GM10248 (cell line): ENCODE measurements at regions of chr4 and their contacts with region 1.

Region 1: GRCh38 chr4:138680989-138681604 is 334.5 kb upstream of the NOCT start:
- DNase-seq: peak; percentile 58
- CTCF ChIP-seq: peak; percentile 85

Region 2: GRCh38 chr4:137819964-137820383 is 861.1 kb before region 1 on chr4:
- CTCF ChIA-PET with region 1: interaction called, 32 read pairs
- POLR2A ChIA-PET with region 1: no interaction called
- DNase-seq: peak; percentile 7
- CTCF ChIP-seq: peak; percentile 69

Region 3: GRCh38 chr4:138035781-138036258 is 645.3 kb before region 1 on chr4:
- CTCF ChIA-PET with region 1: interaction called, 26 read pairs
- POLR2A ChIA-PET with region 1: no interaction called
- DNase-seq: peak; percentile 56
- CTCF ChIP-seq: peak; percentile 50

Region 4: GRCh38 chr4:138669479-138670315 is 11.4 kb before region 1 on chr4:
- CTCF ChIA-PET with region 1: interaction called, 37 read pairs
- POLR2A ChIA-PET with region 1: no interaction called
- DNase-seq: peak; percentile 32
- CTCF ChIP-seq: no peak

Region 5: DNA sequence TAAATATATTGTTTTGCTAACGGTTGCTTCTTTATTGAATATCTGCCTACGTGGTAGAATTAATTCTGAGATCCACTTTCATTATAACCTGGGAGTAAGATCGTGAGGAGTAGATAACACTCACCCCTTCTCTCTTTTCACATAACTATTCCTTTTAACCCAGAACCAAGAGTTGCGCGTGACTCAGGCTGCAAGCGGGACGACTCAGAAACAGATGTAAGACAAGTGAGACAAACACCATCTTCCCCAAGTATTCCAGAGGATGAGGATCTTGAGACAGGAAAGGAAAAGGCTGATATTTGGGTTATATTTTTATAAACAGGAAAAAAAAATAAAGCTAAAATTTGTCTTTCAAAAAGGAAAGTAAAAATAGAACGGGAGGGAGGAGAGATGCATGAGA is 15.7 kb after region 1 on chr4:
- CTCF ChIA-PET with region 1: interaction called, 50 read pairs
- POLR2A ChIA-PET with region 1: no interaction called
- DNase-seq: no peak
- CTCF ChIP-seq: no peak

Region 6: GRCh38 chr4:138727731-138728130 is 46.6 kb after region 1 on chr4:
- CTCF ChIA-PET with region 1: no interaction called
- POLR2A ChIA-PET with region 1: no interaction called
- DNase-seq: no peak
- CTCF ChIP-seq: no peak

Region 7: GRCh38 chr4:138775890-138776289 is 94.8 kb after region 1 on chr4:
- CTCF ChIA-PET with region 1: no interaction called
- POLR2A ChIA-PET with region 1: no interaction called
- DNase-seq: peak; percentile 18
- CTCF ChIP-seq: no peak

Region 8: GRCh38 chr4:138804711-138805110 is 123.6 kb after region 1 on chr4:
- CTCF ChIA-PET with region 1: no interaction called
- POLR2A ChIA-PET with region 1: no interaction called
- DNase-seq: no peak
- CTCF ChIP-seq: no peak

Region 9: DNA sequence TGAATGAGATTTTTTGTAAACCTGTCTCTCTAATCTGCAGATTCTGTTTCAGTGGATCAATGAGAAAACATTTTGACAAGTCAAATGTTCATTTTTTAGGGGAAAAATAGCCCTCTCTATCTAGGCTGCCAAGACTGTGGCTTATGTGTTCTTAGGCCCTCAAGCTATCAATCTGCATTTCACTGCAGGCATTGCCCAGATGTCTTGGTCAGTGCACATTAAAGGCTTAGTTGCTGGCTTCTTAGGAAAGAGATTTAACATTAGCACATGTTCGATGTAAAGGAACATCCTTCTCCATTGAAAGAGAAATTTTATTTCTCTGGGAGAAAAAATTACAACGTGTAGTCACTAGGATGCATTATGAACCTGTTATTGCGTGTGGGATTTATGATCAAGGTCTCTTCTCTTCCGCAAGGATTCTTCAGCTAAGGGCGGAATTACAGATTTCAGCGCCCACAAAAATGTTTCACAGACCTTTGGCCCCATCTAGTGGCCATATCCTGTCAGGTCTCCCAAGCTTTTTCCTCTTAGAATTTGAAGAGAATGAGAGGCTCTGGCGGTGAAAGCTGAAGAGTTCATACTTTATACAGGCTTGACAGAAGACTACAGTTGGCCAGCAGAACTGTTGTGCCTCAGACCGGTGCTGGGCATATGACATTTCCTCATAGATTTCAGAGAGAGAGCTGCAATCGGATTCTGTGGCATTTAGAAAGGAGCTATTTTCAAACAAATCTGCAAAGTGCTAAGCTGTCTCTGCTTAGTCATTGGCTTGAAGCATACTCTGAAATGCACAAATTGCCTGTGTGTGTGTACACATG is 189.8 kb after region 1 on chr4:
- CTCF ChIA-PET with region 1: interaction called, 22 read pairs
- POLR2A ChIA-PET with region 1: no interaction called
- DNase-seq: peak; percentile 67
- CTCF ChIP-seq: peak; percentile 81